B cell (primary cell): ENCODE measurements at regions of chr19 and their contacts with region 1.

Region 1: DNA sequence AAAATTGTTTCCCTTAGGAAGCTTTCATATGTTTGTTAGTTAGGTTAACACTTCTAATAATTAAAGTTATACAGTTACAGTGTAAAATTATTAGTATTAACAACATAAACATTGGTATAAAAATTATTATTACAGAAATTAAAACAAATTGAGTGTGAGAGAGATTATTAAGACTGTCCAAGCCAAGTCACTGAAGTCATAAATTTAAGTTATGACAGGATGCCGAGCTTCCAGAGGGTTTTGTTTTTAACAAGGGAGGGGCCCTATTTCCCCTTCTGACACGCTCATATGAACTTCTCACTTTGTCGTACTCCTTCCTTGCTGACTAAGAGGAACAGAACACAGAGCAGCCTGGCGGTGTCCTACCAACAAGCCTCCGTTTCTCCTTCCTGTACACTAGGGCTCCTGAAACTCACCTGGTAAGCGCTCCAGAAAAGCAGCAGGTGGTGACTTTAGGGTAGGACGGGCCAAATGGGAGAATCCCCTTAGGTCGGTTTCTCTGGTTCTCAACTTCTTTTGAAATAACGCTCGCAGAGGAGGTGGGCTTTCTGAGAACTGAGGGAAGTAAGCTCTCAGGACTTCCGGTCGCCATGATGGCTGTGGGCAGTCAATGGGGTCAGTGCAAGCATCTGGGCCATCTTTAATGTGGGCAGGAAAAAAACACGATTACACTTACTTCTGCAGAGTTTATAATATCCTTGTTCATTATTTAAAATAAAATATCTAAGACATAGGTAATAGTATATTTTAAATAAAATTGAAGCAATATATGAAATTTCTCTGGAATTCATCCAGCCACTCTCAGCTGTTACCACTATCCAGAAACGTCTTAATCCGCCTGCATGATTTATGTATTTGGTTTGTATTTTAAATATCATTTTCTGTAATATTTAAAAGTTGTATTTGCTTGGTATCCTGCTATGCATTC is at the start of gene CARD8:
- DNase-seq: peak; percentile 94
- ATAC-seq: peak; percentile 81
- H3K4me3 ChIP-seq: peak within 1 kb of the TSS; percentile 75 to 99 (median 96)
- H3K4me3 Mint-ChIP-seq: peak within 1 kb of the TSS; percentile 100
- H3K27ac ChIP-seq: peak within 1 kb of the TSS; percentile 92 to 93
- H3K27ac Mint-ChIP-seq: peak within 1 kb of the TSS; percentile 99
- H3K4me1 ChIP-seq: peaks cover 37 to 49% of the 10 kb centered on the region in 2 donors
- H3K4me1 Mint-ChIP-seq: peaks cover 61% of the 10 kb centered on the region
- H3K27me3 ChIP-seq: no peaks in the 10 kb centered on the region
- H3K27me3 Mint-ChIP-seq: no peaks in the 10 kb centered on the region
- CTCF ChIP-seq: no peak
- total RNA-seq, gene CARD8: 161 and 164 TPM in 2 replicates

Region 2: GRCh38 chr19:48110350-48110966 is 145.2 kb before region 1 on chr19 and contains the start of gene PLA2G4C:
- CTCF ChIA-PET with region 1: interaction called, 24 read pairs
- POLR2A ChIA-PET with region 1: interaction called, 3 read pairs
- intact Hi-C with region 1: loop called (anchors 1 kb)
- DNase-seq: peak; percentile 90
- ATAC-seq: peak; percentile 78
- H3K4me3 ChIP-seq: peak within 1 kb of the TSS in 4 of 5 experiments; percentile 47 to 92 (median 83)
- H3K4me3 Mint-ChIP-seq: peak within 1 kb of the TSS; percentile 87
- H3K27ac ChIP-seq: peak within 1 kb of the TSS; percentile 74 to 99
- H3K27ac Mint-ChIP-seq: peak within 1 kb of the TSS; percentile 92
- H3K4me1 ChIP-seq: peaks cover 25 to 27% of the 10 kb centered on the region in 2 donors
- H3K4me1 Mint-ChIP-seq: peaks cover 16% of the 10 kb centered on the region
- H3K27me3 ChIP-seq: no peaks in the 10 kb centered on the region
- H3K27me3 Mint-ChIP-seq: no peaks in the 10 kb centered on the region
- CTCF ChIP-seq: no peak
- total RNA-seq, gene PLA2G4C: 12.3 and 17.4 TPM in 2 replicates

Region 3: GRCh38 chr19:48152551-48152950 is 103.1 kb before region 1 on chr19:
- CTCF ChIA-PET with region 1: interaction called, 25 read pairs
- POLR2A ChIA-PET with region 1: interaction called, 3 read pairs
- intact Hi-C with region 1: no loop called
- DNase-seq: peak; percentile 75
- ATAC-seq: peak; percentile 54
- H3K4me3 ChIP-seq: no peak overlapping the region
- H3K4me3 Mint-ChIP-seq: no peak overlapping the region
- H3K27ac ChIP-seq: no peak overlapping the region
- H3K27ac Mint-ChIP-seq: no peak overlapping the region
- H3K4me1 ChIP-seq: no peaks in the 10 kb centered on the region
- H3K4me1 Mint-ChIP-seq: no peaks in the 10 kb centered on the region
- H3K27me3 ChIP-seq: no peaks in the 10 kb centered on the region
- H3K27me3 Mint-ChIP-seq: no peaks in the 10 kb centered on the region
- CTCF ChIP-seq: peak; percentile 92

Region 4: DNA sequence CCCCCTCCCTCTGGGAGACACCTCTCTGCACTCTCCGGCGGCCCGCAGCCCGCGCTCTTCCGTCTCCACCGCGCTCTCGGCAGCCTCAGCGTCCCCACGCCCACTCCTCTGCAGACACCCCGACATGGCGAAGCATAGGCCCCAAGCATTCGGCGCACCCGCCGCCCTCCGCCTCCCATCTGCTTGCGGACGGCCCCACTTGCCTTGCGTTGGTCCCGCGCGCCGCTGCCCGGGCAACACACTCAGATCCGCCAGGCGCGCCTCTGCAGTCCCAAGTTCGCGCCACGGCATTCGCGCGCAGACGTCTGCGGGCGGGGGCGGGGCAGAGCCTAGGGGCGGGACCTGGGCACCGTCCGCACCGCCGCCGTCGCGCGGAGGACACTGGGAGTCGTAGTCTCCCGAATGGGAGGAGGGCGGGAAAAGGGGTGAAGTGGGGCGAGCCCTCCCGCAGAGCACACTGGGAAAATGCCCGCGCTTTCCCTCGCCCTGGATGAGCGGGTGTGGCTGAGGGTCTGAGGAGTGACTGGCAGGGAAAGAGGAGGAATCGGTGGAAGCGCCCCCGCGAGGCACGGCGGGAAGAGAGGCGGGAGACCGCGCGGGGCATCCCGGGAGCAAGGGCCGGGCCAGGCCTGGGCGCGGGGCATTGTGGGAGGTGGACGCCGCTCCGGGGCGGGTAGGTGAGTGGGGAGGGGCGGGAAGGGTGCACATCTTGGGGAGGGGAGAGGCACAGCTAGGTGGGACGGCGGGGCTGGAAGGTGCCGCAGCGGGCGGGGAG is 85.4 kb before region 1 on chr19 and contains the starts of genes LIG1 and ZSWIM9:
- CTCF ChIA-PET with region 1: interaction called, 4 read pairs
- POLR2A ChIA-PET with region 1: interaction called, 10 read pairs
- intact Hi-C with region 1: loop called (anchors 1 kb)
- DNase-seq: peak; percentile 97
- ATAC-seq: peak; percentile 80
- H3K4me3 ChIP-seq: peak within 1 kb of the TSS; percentile 41 to 99 (median 90)
- H3K4me3 Mint-ChIP-seq: peak within 1 kb of the TSS; percentile 96
- H3K27ac ChIP-seq: peak within 1 kb of the TSS; percentile 86 to 87
- H3K27ac Mint-ChIP-seq: peak within 1 kb of the TSS; percentile 98
- H3K4me1 ChIP-seq: peaks cover 10 to 15% of the 10 kb centered on the region in 2 donors
- H3K4me1 Mint-ChIP-seq: peaks cover 25% of the 10 kb centered on the region
- H3K27me3 ChIP-seq: no peaks in the 10 kb centered on the region
- H3K27me3 Mint-ChIP-seq: no peaks in the 10 kb centered on the region
- CTCF ChIP-seq: no peak
- total RNA-seq, gene LIG1: 111 and 116 TPM in 2 replicates
- total RNA-seq, gene ZSWIM9: 11.8 and 15.7 TPM in 2 replicates

Region 5: DNA sequence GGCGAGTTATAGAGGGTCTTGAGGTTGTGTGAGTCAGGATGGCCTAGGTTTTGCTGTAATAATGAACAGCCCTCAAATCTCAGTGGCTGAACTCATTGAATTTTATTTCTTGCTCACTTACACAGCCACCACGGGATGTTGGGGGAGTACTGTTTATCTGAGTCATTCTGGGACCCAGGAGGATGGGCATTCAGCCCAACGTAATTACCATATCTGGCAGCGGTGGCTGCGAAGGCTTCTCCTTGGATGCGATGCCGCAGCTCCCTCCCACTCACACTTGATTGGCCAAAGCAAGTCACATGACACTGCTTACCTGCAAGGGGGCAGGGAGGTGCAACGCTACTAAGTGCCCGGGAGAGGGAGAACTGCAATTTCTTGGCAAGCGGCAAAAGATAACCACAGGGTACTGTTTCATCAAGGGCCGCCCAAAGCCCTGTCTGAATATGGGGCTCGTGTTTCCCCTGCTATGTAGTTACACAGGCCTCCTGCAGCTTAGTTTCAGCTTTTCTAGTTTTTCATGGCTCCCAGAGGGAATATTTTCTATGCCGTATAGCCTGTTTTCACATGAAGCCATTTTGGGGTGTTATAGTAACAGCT is 65.3 kb before region 1 on chr19:
- CTCF ChIA-PET with region 1: interaction called, 10 read pairs
- POLR2A ChIA-PET with region 1: no interaction called
- intact Hi-C with region 1: no loop called
- DNase-seq: peak; percentile 53
- ATAC-seq: peak; percentile 72
- H3K4me3 ChIP-seq: no peak overlapping the region
- H3K4me3 Mint-ChIP-seq: no peak overlapping the region
- H3K27ac ChIP-seq: no peak overlapping the region
- H3K27ac Mint-ChIP-seq: no peak overlapping the region
- H3K4me1 ChIP-seq: peaks cover 17 to 19% of the 10 kb centered on the region in 2 donors
- H3K4me1 Mint-ChIP-seq: peaks cover 28% of the 10 kb centered on the region
- H3K27me3 ChIP-seq: no peaks in the 10 kb centered on the region
- H3K27me3 Mint-ChIP-seq: no peaks in the 10 kb centered on the region
- CTCF ChIP-seq: peak; percentile 34

Region 6: DNA sequence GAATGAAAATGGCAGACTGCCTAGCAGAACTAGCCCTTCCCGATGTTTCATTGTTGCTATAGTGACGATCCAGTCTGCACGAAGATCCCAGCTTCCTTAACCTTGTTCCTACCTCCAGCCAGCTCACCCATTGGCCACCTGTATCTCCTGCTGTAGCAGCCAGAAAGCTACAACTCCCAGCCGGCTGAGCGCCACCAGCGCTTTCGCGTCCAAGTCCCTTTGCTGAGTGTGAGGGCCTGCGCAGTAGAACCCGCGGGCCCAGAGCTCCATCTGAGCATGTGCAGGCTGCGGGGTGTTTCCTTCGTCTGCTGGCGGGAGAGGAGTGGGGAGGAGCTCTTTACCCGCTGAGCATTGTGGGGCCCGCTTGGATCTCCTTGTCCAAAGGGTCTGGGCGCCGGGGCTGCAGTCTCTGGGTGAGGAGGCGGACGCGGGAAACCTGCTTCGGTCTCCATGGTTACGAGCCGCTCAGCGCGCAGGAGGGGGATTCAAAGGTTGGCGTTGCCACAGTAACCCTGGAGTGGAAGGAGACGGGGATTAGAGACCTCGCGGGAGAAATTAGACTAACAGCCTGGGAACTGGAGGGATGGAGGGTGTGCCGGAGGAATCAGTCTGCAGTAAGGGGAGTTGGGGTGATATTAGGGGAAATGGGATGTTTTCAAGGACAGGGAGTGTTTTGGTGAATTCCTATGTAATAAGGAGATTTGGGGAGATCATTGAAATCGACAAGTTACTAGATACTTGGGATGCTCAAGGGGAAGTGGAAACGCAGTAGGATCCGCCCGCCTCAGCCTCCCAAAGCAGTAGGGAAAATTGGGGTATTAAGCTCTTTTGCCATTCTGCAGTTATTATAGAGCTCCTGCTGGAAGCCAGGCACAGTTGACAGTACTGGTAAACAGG is 51.7 kb before region 1 on chr19:
- CTCF ChIA-PET with region 1: interaction called, 24 read pairs
- POLR2A ChIA-PET with region 1: interaction called, 4 read pairs
- intact Hi-C with region 1: loop called (anchors 1 kb)
- DNase-seq: peak; percentile 91
- ATAC-seq: peak; percentile 100
- H3K4me3 ChIP-seq: peak overlapping the region; percentile 55 to 89 (median 80)
- H3K4me3 Mint-ChIP-seq: no peak overlapping the region
- H3K27ac ChIP-seq: peak overlapping the region; percentile 60 to 76
- H3K27ac Mint-ChIP-seq: no peak overlapping the region
- H3K4me1 ChIP-seq: peaks cover 15 to 18% of the 10 kb centered on the region in 2 donors
- H3K4me1 Mint-ChIP-seq: peaks cover 15% of the 10 kb centered on the region
- H3K27me3 ChIP-seq: no peaks in the 10 kb centered on the region
- H3K27me3 Mint-ChIP-seq: no peaks in the 10 kb centered on the region
- CTCF ChIP-seq: no peak

Region 7: GRCh38 chr19:48303367-48303766 is 47.7 kb after region 1 on chr19:
- CTCF ChIA-PET with region 1: no interaction called
- POLR2A ChIA-PET with region 1: no interaction called
- intact Hi-C with region 1: no loop called
- DNase-seq: no peak
- ATAC-seq: no peak
- H3K4me3 ChIP-seq: no peak overlapping the region
- H3K4me3 Mint-ChIP-seq: no peak overlapping the region
- H3K27ac ChIP-seq: no peak overlapping the region
- H3K27ac Mint-ChIP-seq: no peak overlapping the region
- H3K4me1 ChIP-seq: no peaks in the 10 kb centered on the region
- H3K4me1 Mint-ChIP-seq: no peaks in the 10 kb centered on the region
- H3K27me3 ChIP-seq: no peaks in the 10 kb centered on the region
- H3K27me3 Mint-ChIP-seq: peaks cover 9% of the 10 kb centered on the region
- CTCF ChIP-seq: no peak

Region 8: DNA sequence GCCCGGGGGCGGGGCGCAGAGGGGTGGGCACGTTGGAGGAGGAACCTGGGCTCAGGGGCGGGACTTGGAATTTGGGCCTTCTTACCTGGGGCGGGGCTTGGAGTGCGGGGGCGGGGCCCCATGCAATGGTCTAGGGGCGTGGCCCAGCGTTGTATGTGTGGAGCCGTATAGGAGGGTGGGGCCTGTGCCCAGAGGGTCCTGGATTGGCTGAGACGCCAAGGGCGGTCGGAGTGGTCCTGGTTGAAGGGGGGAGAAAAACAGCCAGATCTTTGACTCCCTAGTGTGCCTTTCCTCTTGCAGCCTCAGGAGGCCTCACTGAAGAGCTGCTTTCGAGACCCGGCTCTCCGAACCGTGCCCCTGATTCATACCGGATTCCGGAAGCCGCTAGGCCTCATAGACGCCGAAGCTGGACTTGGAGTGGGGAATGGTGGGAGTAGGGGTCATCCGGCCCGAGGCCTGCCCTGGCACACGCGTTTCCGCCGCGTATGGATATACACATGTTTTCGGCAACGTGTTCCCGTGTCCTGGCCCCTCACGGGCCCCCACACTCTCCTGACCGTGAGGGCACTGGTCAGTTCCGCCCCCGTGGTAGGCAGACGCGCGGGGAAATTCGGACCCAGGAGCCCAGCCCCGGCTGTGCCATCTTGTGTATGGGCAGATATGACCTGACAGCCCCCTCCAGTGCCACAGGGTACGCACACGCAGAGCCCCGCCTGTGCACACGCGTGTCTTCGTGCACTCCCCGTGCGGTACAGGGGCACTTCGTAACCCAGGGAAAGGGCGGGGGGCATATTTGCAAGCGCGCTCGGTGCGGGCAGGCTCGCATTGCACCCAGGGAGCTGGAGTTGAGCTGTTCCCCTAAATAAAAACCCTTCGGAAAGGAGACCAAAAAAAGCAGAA is 1334.7 kb after region 1 on chr19:
- CTCF ChIA-PET with region 1: no interaction called
- POLR2A ChIA-PET with region 1: no interaction called
- intact Hi-C with region 1: loop called (anchors 5 kb)
- DNase-seq: peak; percentile 97
- ATAC-seq: peak; percentile 80
- H3K4me3 ChIP-seq: peak overlapping the region; percentile 69 to 85 (median 77)
- H3K4me3 Mint-ChIP-seq: peak overlapping the region; percentile 84
- H3K27ac ChIP-seq: peak overlapping the region; percentile 72 to 85
- H3K27ac Mint-ChIP-seq: peak overlapping the region; percentile 91
- H3K4me1 ChIP-seq: peaks cover 16 to 26% of the 10 kb centered on the region in 2 donors
- H3K4me1 Mint-ChIP-seq: peaks cover 27% of the 10 kb centered on the region
- H3K27me3 ChIP-seq: no peaks in the 10 kb centered on the region
- H3K27me3 Mint-ChIP-seq: no peaks in the 10 kb centered on the region
- CTCF ChIP-seq: peak; percentile 13